Prostate gland (tissue), 2 donors: ENCODE measurements at regions of chr6 and their contacts with region 1.

Region 1: GRCh38 chr6:70566751-70567382 is at the start of gene SDHAF4:
- DNase-seq: peak; percentile 85
- H3K4me3 ChIP-seq: peak within 1 kb of the TSS; percentile 76 to 97
- H3K27ac ChIP-seq: peak within 1 kb of the TSS; percentile 84 to 89
- H3K4me1 ChIP-seq: no peaks in the 10 kb centered on the region
- H3K27me3 ChIP-seq: no peaks in the 10 kb centered on the region
- CTCF ChIP-seq: peak in 1 of 4 experiments; percentile 3
- POLR2A ChIP-seq: peak; percentile 60
- total RNA-seq, gene SDHAF4: 8.5 to 8.8 TPM

Region 2: DNA sequence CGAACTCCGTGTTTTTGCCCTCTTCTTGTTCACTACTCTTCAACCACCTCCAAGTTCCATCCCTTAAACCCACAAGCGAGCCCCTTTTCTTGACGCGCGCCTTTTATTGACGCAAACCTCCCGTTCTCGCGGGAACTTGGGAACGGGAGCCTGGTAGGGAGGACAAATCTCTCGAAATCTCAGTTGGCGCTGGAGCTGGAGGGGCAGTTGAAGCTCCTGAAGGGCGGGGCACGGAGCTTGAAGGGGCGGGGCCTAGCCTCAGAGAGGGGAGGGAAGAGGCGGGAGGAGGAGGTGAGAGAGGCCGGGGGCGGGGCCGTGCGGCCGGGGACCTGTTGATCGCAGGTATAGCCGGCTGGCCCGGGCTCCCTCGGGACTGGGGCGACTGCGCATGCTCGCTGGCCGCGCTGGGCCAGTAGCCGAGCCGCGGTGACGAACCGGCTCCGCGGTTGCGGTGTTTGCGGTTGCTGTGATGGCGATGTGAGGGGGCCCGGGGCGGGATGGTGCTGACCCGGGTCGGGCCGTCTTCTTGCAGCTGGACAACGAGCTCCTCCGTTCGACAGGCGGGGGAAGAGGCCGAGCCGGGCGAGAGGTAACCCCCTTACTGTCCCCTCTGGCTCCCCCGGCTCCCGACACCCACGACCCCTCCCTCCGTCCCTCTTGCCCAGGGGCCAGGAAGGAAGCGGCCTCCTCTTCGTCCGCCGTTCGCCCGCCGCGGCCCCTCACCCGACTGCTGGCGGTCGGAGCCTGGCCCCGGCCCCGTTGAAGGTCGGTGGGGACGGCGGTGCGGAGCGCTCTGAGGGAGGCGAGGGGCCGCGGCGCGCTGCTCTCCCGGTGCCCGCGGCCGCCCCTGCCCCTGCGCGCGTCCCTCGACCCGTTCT is 153.5 kb before region 1 on chr6 and contains the start of gene FAM135A:
- intact Hi-C with region 1: loop called (anchors 10 kb)
- DNase-seq: peak; percentile 99
- H3K4me3 ChIP-seq: peak within 1 kb of the TSS; percentile 92 to 97
- H3K27ac ChIP-seq: peak within 1 kb of the TSS; percentile 90 to 93
- H3K4me1 ChIP-seq: no peaks in the 10 kb centered on the region
- H3K27me3 ChIP-seq: no peaks in the 10 kb centered on the region
- CTCF ChIP-seq: peak in 2 of 4 experiments; percentile 7 to 17
- POLR2A ChIP-seq: peak; percentile 92
- total RNA-seq, gene FAM135A: 66.3 to 117 TPM

Region 3: GRCh38 chr6:70667711-70668498 is 101.0 kb after region 1 on chr6 and contains the start of gene SMAP1:
- intact Hi-C with region 1: loop called (anchors 10 kb)
- DNase-seq: peak; percentile 91
- H3K4me3 ChIP-seq: peak within 1 kb of the TSS; percentile 74 to 84
- H3K27ac ChIP-seq: peak within 1 kb of the TSS; percentile 89 to 94
- H3K4me1 ChIP-seq: peaks cover 10% of the 10 kb centered on the region
- H3K27me3 ChIP-seq: no peaks in the 10 kb centered on the region
- CTCF ChIP-seq: peak in 1 of 4 experiments; percentile 10
- POLR2A ChIP-seq: peak; percentile 81
- total RNA-seq, gene SMAP1: 26.0 to 30.3 TPM

Region 4: GRCh38 chr6:70686548-70687133 is 119.8 kb after region 1 on chr6:
- intact Hi-C with region 1: loop called (anchors 5 kb)
- DNase-seq: peak; percentile 36
- H3K4me3 ChIP-seq: no peak overlapping the region
- H3K27ac ChIP-seq: no peak overlapping the region
- H3K4me1 ChIP-seq: peaks cover 2% of the 10 kb centered on the region
- H3K27me3 ChIP-seq: no peaks in the 10 kb centered on the region
- CTCF ChIP-seq: peak; percentile 26 to 83 (median 81)
- POLR2A ChIP-seq: no peak